Cardiac septum (tissue), 1 donor: ENCODE measurements at regions of chr14 and their contacts with region 1.

Region 1: GRCh38 chr14:103576371-103577024 is 13.7 kb downstream of the COA8 start:
- DNase-seq: peak; percentile 94

Region 2: GRCh38 chr14:103628684-103629502 is 52.4 kb after region 1 on chr14 and contains the start of gene KLC1:
- intact Hi-C with region 1: loop called (anchors 5 kb)
- DNase-seq: peak; percentile 94
- total RNA-seq, gene KLC1: 219 TPM

Region 3: GRCh38 chr14:103715052-103716000 is 138.8 kb after region 1 on chr14 and contains the starts of genes XRCC3 and ZFYVE21:
- intact Hi-C with region 1: loop called (anchors 5 kb)
- DNase-seq: peak; percentile 99
- total RNA-seq, gene XRCC3: 3.9 TPM
- total RNA-seq, gene ZFYVE21: 60.9 TPM

Region 4: DNA sequence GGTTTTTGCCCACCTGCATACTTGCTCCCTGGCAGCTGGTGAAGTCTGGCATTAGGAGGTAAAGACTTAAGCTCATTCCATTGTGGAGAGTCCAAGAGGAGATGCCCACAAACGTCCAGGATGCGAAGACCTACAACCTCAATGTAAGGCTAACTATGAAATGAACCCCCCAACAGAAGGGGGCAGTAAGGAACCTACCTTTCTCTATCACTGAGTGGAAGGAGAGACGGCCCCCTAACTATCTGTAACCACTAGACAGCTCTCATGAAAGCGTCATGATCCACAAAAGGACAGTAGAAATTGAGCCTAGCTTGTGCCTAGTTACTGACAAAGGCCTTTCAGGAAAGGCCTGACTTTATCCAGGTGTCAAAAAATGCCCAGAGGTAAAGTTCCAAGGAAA is 194.4 kb after region 1 on chr14:
- intact Hi-C with region 1: no loop called
- DNase-seq: no peak

Region 5: GRCh38 chr14:103910262-103910935 is 333.9 kb after region 1 on chr14:
- intact Hi-C with region 1: loop called (anchors 5 kb)
- DNase-seq: peak; percentile 90

Region 6: GRCh38 chr14:103989964-103990363 is 413.5 kb after region 1 on chr14:
- intact Hi-C with region 1: loop called (anchors 10 kb)
- DNase-seq: no peak